Natural killer cell (primary cell): ENCODE measurements at regions of chr4 and their contacts with region 1.

Region 1: DNA sequence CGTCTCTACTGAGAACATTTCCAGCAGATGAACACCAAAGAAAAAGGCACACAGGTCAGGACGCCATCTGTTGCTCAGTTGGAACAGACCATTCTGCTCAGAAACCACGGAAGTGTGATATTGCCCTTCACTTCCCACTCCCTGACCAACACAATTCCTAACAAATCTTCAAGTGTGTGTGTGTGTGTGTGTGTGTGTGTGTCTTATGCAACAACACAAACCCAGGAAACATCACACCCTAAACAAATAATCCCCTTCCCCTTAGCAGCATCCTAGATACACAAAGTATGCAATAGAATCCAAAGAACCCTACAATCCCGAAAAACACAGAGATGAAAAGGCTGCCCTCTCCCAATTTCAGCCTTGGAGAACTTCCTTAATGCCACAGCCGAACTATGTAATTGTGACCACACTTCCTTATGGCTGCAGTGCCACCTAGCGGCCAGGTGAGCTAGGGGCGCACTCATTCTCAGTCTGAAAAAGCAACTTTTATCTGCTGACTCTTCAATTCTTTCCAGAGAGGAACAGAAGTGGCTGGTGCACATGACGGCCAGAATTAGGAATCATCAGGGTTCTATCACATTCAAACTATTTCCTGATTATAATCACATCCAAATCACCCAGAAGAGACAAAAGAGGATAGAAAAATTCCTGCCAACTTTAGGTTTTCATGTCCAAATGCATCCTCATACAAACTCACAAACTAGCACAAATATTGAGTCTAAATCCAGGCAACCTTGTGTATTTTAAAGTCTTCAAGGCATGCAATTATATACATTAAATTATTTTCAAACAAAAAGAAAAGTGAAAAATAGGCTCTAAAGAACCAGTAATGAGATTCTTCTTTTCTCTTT is 164.9 kb downstream of the DHX15 start:
- DNase-seq: peak in 1 of 2 donors; percentile 71
- ATAC-seq: peak in 2 of 3 donors; percentile 57 to 59
- H3K4me3 ChIP-seq: no peak overlapping the region
- H3K4me3 Mint-ChIP-seq: no peak overlapping the region
- H3K27ac ChIP-seq: no peak overlapping the region
- H3K27ac Mint-ChIP-seq: no peak overlapping the region
- H3K4me1 ChIP-seq: no peaks in the 10 kb centered on the region
- H3K4me1 Mint-ChIP-seq: peaks cover 6% of the 10 kb centered on the region in 2 donors
- H3K27me3 ChIP-seq: no peaks in the 10 kb centered on the region
- H3K27me3 Mint-ChIP-seq: peaks cover 4 to 26% of the 10 kb centered on the region in 2 donors
- CTCF ChIP-seq: peak; percentile 62

Region 2: GRCh38 chr4:22897520-22898108 is 1521.8 kb before region 1 on chr4:
- intact Hi-C with region 1: loop called (anchors 5 kb)
- DNase-seq: peak in 1 of 2 donors; percentile 27
- ATAC-seq: no peak
- H3K4me3 ChIP-seq: no peak overlapping the region
- H3K4me3 Mint-ChIP-seq: no peak overlapping the region
- H3K27ac ChIP-seq: no peak overlapping the region
- H3K27ac Mint-ChIP-seq: no peak overlapping the region
- H3K4me1 ChIP-seq: no peaks in the 10 kb centered on the region
- H3K4me1 Mint-ChIP-seq: no peaks in the 10 kb centered on the region
- H3K27me3 ChIP-seq: no peaks in the 10 kb centered on the region
- H3K27me3 Mint-ChIP-seq: no peaks in the 10 kb centered on the region
- CTCF ChIP-seq: peak; percentile 48